ENCODE measurements at regions of chr5 and their contacts with region 1.

Region 1: GRCh38 chr5:143749581-143750205 is 62.3 kb upstream of the HMHB1 start:
- DNase-seq: no peak
- H3K4me3 ChIP-seq: no peak overlapping the region
- H3K27ac ChIP-seq: no peak overlapping the region
- H3K4me1 ChIP-seq: no peaks in the 10 kb centered on the region
- CTCF ChIP-seq: no peak

Region 2: DNA sequence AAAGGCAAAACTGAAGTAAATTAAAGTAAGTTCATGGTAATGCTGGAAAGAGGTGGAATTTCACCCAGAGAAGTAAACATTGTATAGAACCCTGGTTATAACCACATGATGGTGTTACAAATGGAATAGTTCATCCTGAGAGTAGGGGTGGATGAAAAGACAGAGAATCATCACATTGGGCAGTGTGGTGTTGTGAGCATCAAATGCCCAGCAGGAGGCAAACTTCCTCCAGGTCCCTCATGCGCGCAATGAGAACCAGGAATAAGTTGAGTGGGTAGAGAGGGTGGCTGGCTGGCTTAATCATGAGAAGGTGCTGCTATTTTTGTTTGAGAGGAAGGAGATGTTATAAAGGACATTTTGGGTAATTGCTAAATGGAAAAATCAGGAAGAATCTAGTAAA is 101.0 kb before region 1 on chr5:
- CTCF ChIA-PET with region 1: no interaction called
- POLR2A ChIA-PET with region 1: no interaction called
- intact Hi-C with region 1: no loop called
- DNase-seq: no peak
- H3K4me3 ChIP-seq: no peak overlapping the region
- H3K27ac ChIP-seq: no peak overlapping the region
- H3K4me1 ChIP-seq: no peaks in the 10 kb centered on the region
- CTCF ChIP-seq: peak; percentile 56

Region 3: GRCh38 chr5:143685246-143685802 is 64.4 kb before region 1 on chr5:
- CTCF ChIA-PET with region 1: no interaction called
- POLR2A ChIA-PET with region 1: no interaction called
- intact Hi-C with region 1: no loop called
- DNase-seq: peak; percentile 22
- H3K4me3 ChIP-seq: no peak overlapping the region
- H3K27ac ChIP-seq: no peak overlapping the region
- H3K4me1 ChIP-seq: no peaks in the 10 kb centered on the region
- CTCF ChIP-seq: peak; percentile 69

Region 4: DNA sequence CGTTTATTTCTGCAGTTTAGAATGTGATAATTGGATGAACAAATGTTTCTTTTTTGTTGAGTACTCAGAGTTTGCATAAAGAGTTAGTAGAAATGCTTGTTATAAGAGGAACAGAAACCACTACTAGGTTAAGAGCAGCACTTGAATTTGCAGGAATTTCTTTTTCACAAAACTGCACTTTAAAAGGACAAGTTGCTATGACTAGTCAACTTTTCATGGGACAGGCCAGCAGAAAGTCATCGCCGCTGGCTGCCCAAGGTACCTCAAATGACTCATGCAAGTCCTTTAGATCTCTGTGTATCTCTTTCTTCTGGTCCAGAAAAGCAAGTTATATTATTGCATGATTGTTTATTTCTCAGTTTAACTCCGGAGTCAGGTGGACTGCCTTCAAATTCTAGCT is 35.1 kb before region 1 on chr5:
- CTCF ChIA-PET with region 1: no interaction called
- POLR2A ChIA-PET with region 1: no interaction called
- intact Hi-C with region 1: no loop called
- DNase-seq: peak; percentile 47
- H3K4me3 ChIP-seq: peak overlapping the region; percentile 43
- H3K27ac ChIP-seq: peak overlapping the region; percentile 11
- H3K4me1 ChIP-seq: peaks cover 21% of the 10 kb centered on the region
- CTCF ChIP-seq: no peak

Region 5: DNA sequence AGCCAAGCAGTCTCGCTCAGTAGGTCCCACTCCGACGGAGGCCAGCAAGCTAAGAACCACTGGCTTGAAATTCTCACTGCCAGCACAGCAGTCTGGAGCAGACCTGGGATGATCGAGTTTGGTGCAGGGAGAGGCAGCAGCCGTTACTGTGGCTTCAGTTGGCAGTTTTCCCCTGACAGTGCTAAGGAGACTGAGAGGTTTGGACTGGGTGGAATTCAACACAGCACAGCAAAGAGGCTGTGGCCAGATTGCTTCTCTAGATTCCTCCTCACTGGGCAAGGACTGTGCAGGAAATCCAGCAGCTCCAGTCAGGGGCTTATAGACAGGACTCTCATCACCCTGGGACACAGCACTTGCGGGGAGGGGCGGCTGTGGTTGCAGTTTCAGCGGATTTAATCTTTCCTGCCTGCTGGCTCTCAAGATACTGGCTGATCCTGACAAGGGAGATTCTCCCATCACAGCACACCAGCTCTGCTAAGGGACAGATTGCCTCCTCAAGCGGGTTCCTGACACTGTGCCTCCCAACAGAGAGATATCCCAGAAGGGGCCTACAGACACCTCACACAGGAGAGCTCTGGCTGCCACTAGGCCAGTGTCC is 298.7 kb after region 1 on chr5:
- CTCF ChIA-PET with region 1: no interaction called
- POLR2A ChIA-PET with region 1: interaction called, 10 read pairs
- intact Hi-C with region 1: no loop called
- DNase-seq: no peak
- H3K4me3 ChIP-seq: no peak overlapping the region
- H3K27ac ChIP-seq: no peak overlapping the region
- H3K4me1 ChIP-seq: no peaks in the 10 kb centered on the region
- CTCF ChIP-seq: no peak

Measured in OCI-LY7 (cell line).